ENCODE measurements at regions of chr17 and their contacts with region 1.

Region 1: GRCh38 chr17:78360371-78361224 is 721 bp upstream of the SOCS3 start:
- DNase-seq: peak; percentile 78 to 95 (median 89)
- ATAC-seq: peak; percentile 13
- H3K4me3 ChIP-seq: peak overlapping the region; percentile 85
- H3K4me3 Mint-ChIP-seq: peak overlapping the region; percentile 95
- H3K27ac ChIP-seq: peak overlapping the region in 1 of 2 donors; percentile 67
- H3K27ac Mint-ChIP-seq: peak overlapping the region; percentile 97
- H3K4me1 ChIP-seq: peaks cover 47% of the 10 kb centered on the region
- H3K4me1 Mint-ChIP-seq: peaks cover 41% of the 10 kb centered on the region
- H3K27me3 ChIP-seq: peaks cover 2 to 3% of the 10 kb centered on the region in 2 experiments
- H3K27me3 Mint-ChIP-seq: no peaks in the 10 kb centered on the region
- CTCF ChIP-seq: peak; percentile 90

Region 2: DNA sequence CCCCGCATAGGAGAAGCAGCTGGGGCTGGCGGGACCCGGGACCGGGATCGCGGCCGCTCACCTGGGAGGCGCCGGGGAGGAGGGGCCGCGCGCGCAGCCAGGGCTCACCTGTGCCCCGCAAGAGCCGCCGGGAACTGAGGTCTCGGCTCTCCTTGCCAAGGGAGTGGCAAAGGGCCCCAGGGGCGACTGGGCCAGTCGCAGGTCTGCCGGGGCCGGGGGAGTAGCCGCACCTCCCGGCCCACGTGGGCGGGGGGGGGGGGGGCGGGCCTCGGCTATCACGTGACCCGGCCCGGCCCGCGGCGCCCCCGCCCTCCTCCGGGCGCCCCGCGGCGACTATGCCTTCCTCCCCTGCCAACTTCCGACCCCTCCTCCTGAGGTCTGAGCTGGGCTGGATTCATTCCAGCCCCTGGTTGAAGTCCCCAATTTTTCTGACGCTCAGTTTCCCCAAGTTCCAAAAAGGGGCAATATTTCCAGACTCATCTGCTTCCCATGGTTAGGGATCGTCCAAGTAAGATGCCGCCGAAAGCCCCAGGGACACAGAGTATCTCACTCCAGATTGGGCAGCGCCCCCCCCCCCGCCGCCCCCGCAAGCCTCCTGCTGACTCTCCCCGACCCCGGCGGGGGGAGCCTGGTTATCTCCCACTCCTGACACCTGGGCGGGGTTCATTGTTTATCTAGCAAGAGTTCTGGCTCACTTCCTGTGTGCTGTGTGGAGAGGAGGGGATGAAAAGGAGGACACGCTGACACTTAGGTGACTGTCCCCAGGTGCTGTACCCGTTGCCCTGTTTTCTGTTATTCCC is 231.8 kb before region 1 on chr17 and contains the start of gene TMC6:
- CTCF ChIA-PET with region 1: no interaction called
- POLR2A ChIA-PET with region 1: interaction called, 4 read pairs
- intact Hi-C with region 1: loop called (anchors 5 to 10 kb)
- DNase-seq: peak; percentile 58 to 89 (median 75)
- ATAC-seq: peak; percentile 43
- H3K4me3 ChIP-seq: peak within 1 kb of the TSS; percentile 94
- H3K4me3 Mint-ChIP-seq: peak within 1 kb of the TSS; percentile 100
- H3K27ac ChIP-seq: peak within 1 kb of the TSS; percentile 75 to 92
- H3K27ac Mint-ChIP-seq: peak within 1 kb of the TSS; percentile 96
- H3K4me1 ChIP-seq: peaks cover 76% of the 10 kb centered on the region
- H3K4me1 Mint-ChIP-seq: peaks cover 56% of the 10 kb centered on the region
- H3K27me3 ChIP-seq: no peaks in the 10 kb centered on the region
- H3K27me3 Mint-ChIP-seq: no peaks in the 10 kb centered on the region
- CTCF ChIP-seq: no peak
- total RNA-seq, gene TMC6: 645 to 659 TPM

Region 3: GRCh38 chr17:78147315-78147998 is 213.1 kb before region 1 on chr17:
- CTCF ChIA-PET with region 1: no interaction called
- POLR2A ChIA-PET with region 1: no interaction called
- intact Hi-C with region 1: no loop called
- DNase-seq: peak in 2 of 14 experiments; percentile 55 to 57
- ATAC-seq: peak; percentile 77
- H3K4me3 ChIP-seq: no peak overlapping the region
- H3K4me3 Mint-ChIP-seq: no peak overlapping the region
- H3K27ac ChIP-seq: peak overlapping the region in 1 of 2 donors; percentile 23
- H3K27ac Mint-ChIP-seq: peak overlapping the region; percentile 80
- H3K4me1 ChIP-seq: peaks cover 49% of the 10 kb centered on the region
- H3K4me1 Mint-ChIP-seq: peaks cover 26% of the 10 kb centered on the region
- H3K27me3 ChIP-seq: no peaks in the 10 kb centered on the region
- H3K27me3 Mint-ChIP-seq: no peaks in the 10 kb centered on the region
- CTCF ChIP-seq: no peak

Region 4: GRCh38 chr17:78289802-78290363 is 70.7 kb before region 1 on chr17:
- CTCF ChIA-PET with region 1: interaction called, 8 read pairs
- POLR2A ChIA-PET with region 1: interaction called, 4 read pairs
- intact Hi-C with region 1: loop called (anchors 1 to 2 kb)
- DNase-seq: peak; percentile 62 to 91 (median 72)
- ATAC-seq: peak; percentile 98
- H3K4me3 ChIP-seq: no peak overlapping the region
- H3K4me3 Mint-ChIP-seq: no peak overlapping the region
- H3K27ac ChIP-seq: no peak overlapping the region
- H3K27ac Mint-ChIP-seq: no peak overlapping the region
- H3K4me1 ChIP-seq: peaks cover 16% of the 10 kb centered on the region
- H3K4me1 Mint-ChIP-seq: no peaks in the 10 kb centered on the region
- H3K27me3 ChIP-seq: no peaks in the 10 kb centered on the region
- H3K27me3 Mint-ChIP-seq: no peaks in the 10 kb centered on the region
- CTCF ChIP-seq: peak; percentile 77

Region 5: GRCh38 chr17:78341559-78342448 is 18.8 kb before region 1 on chr17:
- CTCF ChIA-PET with region 1: interaction called, 19 read pairs
- POLR2A ChIA-PET with region 1: interaction called, 4 read pairs
- intact Hi-C with region 1: loop called (anchors 1 kb)
- DNase-seq: peak in 3 of 14 experiments; percentile 33 to 67 (median 63)
- ATAC-seq: no peak
- H3K4me3 ChIP-seq: peak overlapping the region; percentile 19
- H3K4me3 Mint-ChIP-seq: peak overlapping the region; percentile 51
- H3K27ac ChIP-seq: peak overlapping the region in 1 of 2 donors; percentile 7
- H3K27ac Mint-ChIP-seq: peak overlapping the region; percentile 99
- H3K4me1 ChIP-seq: peaks cover 79% of the 10 kb centered on the region
- H3K4me1 Mint-ChIP-seq: peaks cover 73% of the 10 kb centered on the region
- H3K27me3 ChIP-seq: no peaks in the 10 kb centered on the region
- H3K27me3 Mint-ChIP-seq: no peaks in the 10 kb centered on the region
- CTCF ChIP-seq: no peak

Region 6: GRCh38 chr17:78383725-78384471 is 23.3 kb after region 1 on chr17:
- CTCF ChIA-PET with region 1: interaction called, 23 read pairs
- POLR2A ChIA-PET with region 1: interaction called, 6 read pairs
- intact Hi-C with region 1: no loop called
- DNase-seq: peak in 8 of 14 experiments; percentile 16 to 76 (median 49)
- ATAC-seq: no peak
- H3K4me3 ChIP-seq: no peak overlapping the region
- H3K4me3 Mint-ChIP-seq: peak overlapping the region; percentile 79
- H3K27ac ChIP-seq: peak overlapping the region; percentile 35 to 48
- H3K27ac Mint-ChIP-seq: peak overlapping the region; percentile 75
- H3K4me1 ChIP-seq: peaks cover 94% of the 10 kb centered on the region
- H3K4me1 Mint-ChIP-seq: peaks cover 80% of the 10 kb centered on the region
- H3K27me3 ChIP-seq: no peaks in the 10 kb centered on the region
- H3K27me3 Mint-ChIP-seq: no peaks in the 10 kb centered on the region
- CTCF ChIP-seq: no peak